HAP-1 (cell line): ENCODE measurements at regions of chrX and their contacts with region 1.

Region 1: DNA sequence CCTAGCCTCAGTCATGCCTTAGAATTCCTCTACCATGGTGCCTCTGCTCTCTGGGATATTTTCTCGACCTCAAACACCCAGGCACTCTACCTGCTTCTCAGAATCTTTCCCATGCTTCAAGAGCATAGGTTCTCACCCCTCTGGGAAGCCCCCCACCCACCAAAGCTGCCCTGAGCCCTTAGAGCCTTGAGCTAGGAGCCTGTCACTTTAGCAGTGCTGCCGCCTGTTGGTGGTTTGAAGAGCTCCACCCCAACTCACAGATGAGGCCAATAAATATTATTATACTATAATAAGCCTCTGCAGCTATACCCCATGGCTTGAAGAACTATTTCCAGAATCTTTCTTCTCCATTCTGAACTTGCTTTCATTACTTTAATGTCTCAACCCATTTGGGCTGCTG is 109.7 kb downstream of the RTL5 start:
- DNase-seq: peak; percentile 25 to 61
- H3K4me3 ChIP-seq: no peak overlapping the region
- H3K4me1 ChIP-seq: peaks cover 8% of the 10 kb centered on the region
- H3K27me3 ChIP-seq: no peaks in the 10 kb centered on the region

Region 2: DNA sequence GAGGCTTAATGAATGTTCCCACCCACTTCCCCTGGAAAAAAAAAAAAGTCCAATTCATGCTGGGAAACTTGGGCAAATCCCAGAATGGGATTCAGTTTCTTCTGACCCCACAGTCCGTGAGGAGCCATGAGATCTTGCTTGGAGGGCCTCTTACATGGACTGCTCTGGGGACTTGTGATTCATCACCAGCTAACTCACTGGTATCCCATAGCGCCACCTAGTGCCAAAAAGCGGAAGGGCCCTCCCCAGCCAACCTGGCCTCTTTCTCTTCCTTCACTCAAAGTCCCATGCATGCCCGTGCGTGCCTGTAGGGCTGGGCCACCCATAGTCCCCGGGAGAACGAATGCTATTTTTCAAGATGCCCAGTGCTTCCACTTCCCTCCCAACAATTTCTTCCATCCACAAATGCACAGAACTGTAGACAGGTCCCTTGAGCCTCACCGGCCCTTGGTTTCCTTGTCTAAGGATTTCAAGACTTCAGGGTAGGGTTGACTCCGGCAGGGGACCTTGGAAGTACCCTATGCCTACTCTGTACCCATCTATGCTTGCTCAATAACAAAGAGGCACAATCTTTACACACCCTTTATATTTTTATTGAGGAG is 104.7 kb after region 1 on chrX:
- in situ Hi-C with region 1: loop called (anchors 5 kb)
- DNase-seq: peak; percentile 82 to 95
- H3K4me3 ChIP-seq: no peak overlapping the region
- H3K4me1 ChIP-seq: peaks cover 17% of the 10 kb centered on the region
- H3K27me3 ChIP-seq: no peaks in the 10 kb centered on the region

Region 3: DNA sequence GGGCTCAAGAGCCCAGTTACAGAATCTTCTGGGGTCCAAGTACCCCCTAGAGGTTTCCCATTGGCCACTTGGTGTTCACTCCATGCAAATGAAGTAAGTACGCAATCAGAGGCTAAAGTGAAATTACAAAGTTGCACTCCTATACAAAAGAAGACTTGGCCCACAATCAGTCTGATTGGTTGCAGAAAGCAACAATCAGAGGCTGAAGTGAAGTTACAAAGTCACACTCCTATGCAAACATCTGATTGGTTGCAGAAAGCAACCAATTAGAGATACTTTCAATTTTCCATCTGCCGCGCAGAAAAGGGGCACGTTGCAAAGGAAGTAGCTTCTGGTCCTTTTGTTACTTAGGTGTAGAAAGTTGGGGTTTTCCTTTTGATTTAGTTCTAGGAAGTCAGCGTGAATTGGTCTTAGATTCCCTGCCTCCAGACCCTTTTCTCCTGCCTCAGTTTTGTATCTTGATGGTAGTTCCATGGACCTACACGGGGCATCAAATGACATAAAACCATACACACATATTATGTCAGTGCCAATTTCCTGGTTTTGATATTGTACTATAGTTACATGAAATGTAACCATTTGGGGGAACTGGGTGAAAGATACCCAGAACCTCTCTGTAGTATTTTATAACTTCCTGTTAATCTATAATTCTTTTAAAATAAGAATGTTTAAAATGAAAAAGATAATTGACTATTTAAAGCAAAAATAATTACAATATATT is 147.2 kb after region 1 on chrX:
- in situ Hi-C with region 1: no loop called
- DNase-seq: no peak
- H3K4me3 ChIP-seq: no peak overlapping the region
- H3K4me1 ChIP-seq: peaks cover 3% of the 10 kb centered on the region; the same call in 1 of the 2 replicates
- H3K27me3 ChIP-seq: peaks cover 7% of the 10 kb centered on the region; the same call in 1 of the 2 replicates